Activated CD4-positive, alpha-beta T cell treated with anti-CD3 and anti-CD28 coated beads for 36 hours (primary cell): ENCODE measurements at regions of chr19 and their contacts with region 1.

Region 1: DNA sequence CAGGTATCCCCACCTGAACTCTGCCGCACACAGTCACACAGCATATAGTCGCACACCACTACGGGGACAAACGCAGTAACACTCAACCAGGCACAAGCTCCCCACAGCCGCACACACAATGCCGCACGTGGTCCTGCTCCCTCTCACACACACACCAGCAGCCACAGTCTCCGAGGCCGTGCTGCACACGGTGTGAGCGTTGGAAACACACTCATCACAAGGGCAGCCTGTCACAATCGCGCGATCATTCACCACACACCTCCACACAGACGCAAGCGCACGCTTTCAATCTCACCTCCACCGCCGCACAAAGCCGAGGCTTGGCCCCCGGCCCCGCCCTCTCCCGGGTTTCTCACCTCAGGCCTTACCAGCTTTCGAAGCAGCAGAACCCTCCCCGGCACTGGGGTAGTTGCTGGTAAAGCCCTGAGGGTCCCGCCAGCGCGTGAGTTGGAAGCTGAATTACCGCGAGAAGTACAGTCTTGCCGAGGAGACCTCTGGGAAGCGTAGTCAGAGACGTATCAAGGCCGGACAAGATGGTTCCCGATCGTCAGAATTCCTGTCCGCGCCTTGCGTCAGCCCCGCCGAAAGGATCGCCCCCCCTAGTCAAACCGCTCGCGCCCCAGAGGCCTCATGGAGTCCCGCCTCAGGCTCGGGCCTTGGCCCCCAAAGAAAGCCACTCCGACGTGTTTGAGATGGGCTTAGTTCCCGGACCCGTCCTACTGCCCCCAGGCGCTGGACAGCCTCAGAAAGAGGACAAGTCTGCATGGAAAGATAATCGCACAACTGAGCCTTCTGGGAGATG is at the start of gene ZNF566:
- DNase-seq: peak; percentile 97
- ATAC-seq: peak; percentile 93
- H3K4me3 Mint-ChIP-seq: peak within 1 kb of the TSS; percentile 86
- H3K27ac Mint-ChIP-seq: peak within 1 kb of the TSS; percentile 98
- H3K4me1 Mint-ChIP-seq: peaks cover 24% of the 10 kb centered on the region
- H3K27me3 Mint-ChIP-seq: no peaks in the 10 kb centered on the region
- total RNA-seq, gene ZNF566: 4.7 to 5.9 TPM

Region 2: DNA sequence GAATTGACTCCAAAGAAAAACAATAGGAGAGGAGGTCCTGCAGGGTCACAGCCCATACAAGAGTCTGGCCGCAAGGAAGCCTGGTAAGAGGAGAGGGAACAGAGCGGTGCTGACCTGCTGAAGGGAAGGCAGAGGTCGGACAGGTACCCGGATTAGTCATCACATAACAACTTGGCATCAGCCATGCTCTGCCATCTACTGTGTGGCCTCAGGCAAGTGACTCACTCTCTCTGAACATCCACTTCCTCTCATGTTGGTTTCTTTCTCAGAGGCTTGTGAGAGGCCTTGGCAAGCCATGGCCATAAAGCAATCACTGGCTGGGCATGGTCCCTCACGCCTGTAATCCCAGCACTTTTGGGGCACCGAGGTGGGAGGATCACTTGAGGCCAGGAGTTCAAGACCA is 356.8 kb before region 1 on chr19:
- CTCF ChIA-PET with region 1: no interaction called
- POLR2A ChIA-PET with region 1: no interaction called
- intact Hi-C with region 1: loop called (anchors 2 to 10 kb)
- DNase-seq: peak; percentile 74
- ATAC-seq: peak; percentile 77
- H3K4me3 Mint-ChIP-seq: no peak overlapping the region
- H3K27ac Mint-ChIP-seq: peak overlapping the region; percentile 80
- H3K4me1 Mint-ChIP-seq: peaks cover 33% of the 10 kb centered on the region
- H3K27me3 Mint-ChIP-seq: no peaks in the 10 kb centered on the region

Region 3: GRCh38 chr19:36378625-36379509 is 110.5 kb before region 1 on chr19 and contains the start of gene ZFP14:
- CTCF ChIA-PET with region 1: no interaction called
- POLR2A ChIA-PET with region 1: no interaction called
- intact Hi-C with region 1: loop called (anchors 1 to 5 kb)
- DNase-seq: peak; percentile 97
- ATAC-seq: peak; percentile 99
- H3K4me3 Mint-ChIP-seq: peak within 1 kb of the TSS; percentile 93
- H3K27ac Mint-ChIP-seq: peak within 1 kb of the TSS; percentile 88
- H3K4me1 Mint-ChIP-seq: peaks cover 18% of the 10 kb centered on the region
- H3K27me3 Mint-ChIP-seq: no peaks in the 10 kb centered on the region
- total RNA-seq, gene ZFP14: 1.4 to 1.8 TPM

Region 4: GRCh38 chr19:36573020-36573885 is 83.9 kb after region 1 on chr19 and contains the start of gene ZNF529:
- CTCF ChIA-PET with region 1: no interaction called
- POLR2A ChIA-PET with region 1: interaction called, 3 read pairs
- intact Hi-C with region 1: loop called in 1 of 2 experiments (anchors 1 kb)
- DNase-seq: peak; percentile 91
- ATAC-seq: peak; percentile 90
- H3K4me3 Mint-ChIP-seq: peak within 1 kb of the TSS; percentile 83
- H3K27ac Mint-ChIP-seq: peak within 1 kb of the TSS; percentile 93
- H3K4me1 Mint-ChIP-seq: peaks cover 27% of the 10 kb centered on the region
- H3K27me3 Mint-ChIP-seq: no peaks in the 10 kb centered on the region
- total RNA-seq, gene ZNF529: 12.5 to 19.2 TPM

Region 5: GRCh38 chr19:36687214-36688056 is 198.1 kb after region 1 on chr19 and contains the start of gene ZNF567:
- CTCF ChIA-PET with region 1: no interaction called
- POLR2A ChIA-PET with region 1: no interaction called
- intact Hi-C with region 1: loop called in 1 of 2 experiments (anchors 1 kb)
- DNase-seq: peak; percentile 99
- ATAC-seq: peak; percentile 93
- H3K4me3 Mint-ChIP-seq: peak within 1 kb of the TSS; percentile 99
- H3K27ac Mint-ChIP-seq: peak within 1 kb of the TSS; percentile 96
- H3K4me1 Mint-ChIP-seq: peaks cover 27% of the 10 kb centered on the region
- H3K27me3 Mint-ChIP-seq: no peaks in the 10 kb centered on the region
- total RNA-seq, gene ZNF567: 7.4 to 8.6 TPM

Region 6: GRCh38 chr19:37217855-37218591 is 728.7 kb after region 1 on chr19 and contains the start of gene ZNF383:
- CTCF ChIA-PET with region 1: no interaction called
- POLR2A ChIA-PET with region 1: no interaction called
- intact Hi-C with region 1: loop called in 1 of 2 experiments (anchors 2 kb)
- DNase-seq: peak; percentile 89
- ATAC-seq: peak; percentile 87
- H3K4me3 Mint-ChIP-seq: peak within 1 kb of the TSS; percentile 93
- H3K27ac Mint-ChIP-seq: peak within 1 kb of the TSS; percentile 99
- H3K4me1 Mint-ChIP-seq: peaks cover 24% of the 10 kb centered on the region
- H3K27me3 Mint-ChIP-seq: no peaks in the 10 kb centered on the region
- total RNA-seq, gene ZNF383: 8.5 to 9.2 TPM